GM10248 (cell line): ENCODE measurements at regions of chr20 and their contacts with region 1.

Region 1: GRCh38 chr20:53939572-53940359 is 130.6 kb downstream of the BCAS1 start:
- DNase-seq: peak; percentile 70
- CTCF ChIP-seq: peak; percentile 63

Region 2: GRCh38 chr20:53578492-53579222 is 361.1 kb before region 1 on chr20:
- CTCF ChIA-PET with region 1: interaction called, 18 read pairs
- POLR2A ChIA-PET with region 1: no interaction called
- DNase-seq: peak; percentile 72
- CTCF ChIP-seq: peak; percentile 67

Region 3: DNA sequence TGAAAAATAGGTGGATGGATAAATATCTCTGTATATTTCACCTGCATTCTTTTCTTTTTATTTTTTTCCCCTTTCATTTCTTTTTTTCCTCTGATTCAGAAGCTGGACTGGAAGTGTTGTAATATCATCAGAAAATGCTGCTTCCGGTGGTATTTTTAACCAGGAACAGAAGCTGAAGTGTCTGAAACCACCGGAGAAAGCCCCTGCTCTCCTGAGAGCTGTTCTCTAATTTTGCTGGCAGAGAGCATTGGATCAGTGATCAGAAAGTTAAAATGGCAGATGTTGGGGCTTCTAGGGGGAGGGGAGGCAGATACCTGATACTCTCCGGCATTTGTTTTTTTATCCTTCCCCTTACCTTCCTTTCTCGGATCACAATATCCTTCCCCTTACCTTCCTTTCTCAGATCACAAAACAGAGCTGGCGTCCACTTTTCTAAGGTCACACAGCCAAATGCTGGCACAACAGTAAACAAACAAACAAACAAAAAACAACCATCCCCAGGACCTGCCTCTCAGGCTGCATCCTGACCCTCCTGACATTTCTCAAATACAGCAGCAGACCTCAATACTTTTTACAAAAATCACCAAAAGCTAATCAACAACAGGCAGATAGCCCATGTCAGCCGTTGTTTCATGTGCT is 202.9 kb before region 1 on chr20:
- CTCF ChIA-PET with region 1: interaction called, 10 read pairs
- POLR2A ChIA-PET with region 1: no interaction called
- DNase-seq: peak; percentile 43
- CTCF ChIP-seq: no peak

Region 4: GRCh38 chr20:53905019-53905847 is 34.5 kb before region 1 on chr20:
- CTCF ChIA-PET with region 1: interaction called, 12 read pairs
- POLR2A ChIA-PET with region 1: interaction called, 5 read pairs
- DNase-seq: no peak
- CTCF ChIP-seq: no peak

Region 5: DNA sequence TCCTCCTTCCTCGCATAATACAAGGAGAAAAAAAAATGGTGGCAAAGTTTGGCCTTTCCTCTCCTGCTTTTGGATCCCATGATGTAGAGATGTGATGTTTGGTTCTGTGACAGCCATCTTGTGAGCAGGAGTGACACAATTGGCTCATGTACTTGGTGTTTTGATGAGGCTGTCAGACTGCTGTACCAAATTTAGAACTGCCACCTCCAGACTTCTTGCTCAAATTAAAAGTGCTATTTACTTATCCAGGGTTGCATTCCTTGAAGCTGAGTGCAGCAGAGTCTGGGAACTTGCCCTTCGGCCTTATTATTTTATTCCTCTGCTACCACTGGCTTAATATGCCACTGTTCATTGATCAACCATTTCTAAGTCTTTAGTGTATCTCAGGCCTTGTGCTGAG is 108.7 kb after region 1 on chr20:
- CTCF ChIA-PET with region 1: no interaction called
- POLR2A ChIA-PET with region 1: no interaction called
- DNase-seq: no peak
- CTCF ChIP-seq: no peak

Region 6: GRCh38 chr20:54176610-54177009 is 236.8 kb after region 1 on chr20:
- CTCF ChIA-PET with region 1: no interaction called
- POLR2A ChIA-PET with region 1: no interaction called
- DNase-seq: no peak
- CTCF ChIP-seq: no peak